ENCODE measurements at regions of chr20 and their contacts with region 1.

Region 1: GRCh38 chr20:9609887-9610502 is 95.6 kb downstream of the LAMP5 start:
- DNase-seq: peak; percentile 67
- H3K4me3 Mint-ChIP-seq: no peak overlapping the region
- H3K27ac Mint-ChIP-seq: no peak overlapping the region
- H3K4me1 Mint-ChIP-seq: no peaks in the 10 kb centered on the region
- H3K27me3 Mint-ChIP-seq: no peaks in the 10 kb centered on the region

Region 2: DNA sequence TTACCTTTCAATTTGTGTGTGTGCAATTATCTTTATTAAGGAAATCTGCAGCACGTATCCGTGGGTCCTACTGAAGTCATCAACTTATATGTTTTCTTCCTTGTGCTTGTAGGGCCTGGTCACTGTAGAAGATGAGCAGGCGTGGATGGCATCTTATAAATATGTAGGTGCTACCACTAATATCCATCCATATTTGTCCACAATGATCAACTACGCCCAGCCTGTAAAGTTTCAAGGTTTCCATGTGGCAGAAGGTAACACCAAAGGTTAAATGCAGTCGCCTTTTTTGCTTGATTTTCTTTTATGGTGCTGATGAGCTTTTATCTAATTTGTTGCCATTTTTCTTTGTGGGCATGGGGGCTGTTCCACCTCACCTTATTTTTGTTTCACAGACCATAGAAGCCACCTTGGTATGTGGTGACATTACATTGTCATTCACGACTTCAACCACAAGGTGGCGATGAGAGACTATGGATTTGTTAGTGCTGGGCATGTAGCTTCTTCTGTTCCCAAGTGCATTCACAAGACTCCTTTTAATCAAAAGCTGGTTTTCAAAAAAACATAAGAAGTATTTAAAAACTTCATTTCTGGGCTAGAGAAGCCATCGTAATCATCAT is 202.1 kb before region 1 on chr20:
- CTCF ChIA-PET with region 1: interaction called, 103 read pairs
- DNase-seq: peak; percentile 64
- H3K4me3 Mint-ChIP-seq: no peak overlapping the region
- H3K27ac Mint-ChIP-seq: no peak overlapping the region
- H3K4me1 Mint-ChIP-seq: no peaks in the 10 kb centered on the region
- H3K27me3 Mint-ChIP-seq: no peaks in the 10 kb centered on the region

Region 3: GRCh38 chr20:9590189-9590588 is 19.8 kb before region 1 on chr20:
- CTCF ChIA-PET with region 1: no interaction called
- DNase-seq: no peak
- H3K4me3 Mint-ChIP-seq: no peak overlapping the region
- H3K27ac Mint-ChIP-seq: no peak overlapping the region
- H3K4me1 Mint-ChIP-seq: no peaks in the 10 kb centered on the region
- H3K27me3 Mint-ChIP-seq: no peaks in the 10 kb centered on the region

Region 4: GRCh38 chr20:9626357-9626756 is 16.4 kb after region 1 on chr20:
- CTCF ChIA-PET with region 1: no interaction called
- DNase-seq: no peak
- H3K4me3 Mint-ChIP-seq: no peak overlapping the region
- H3K27ac Mint-ChIP-seq: no peak overlapping the region
- H3K4me1 Mint-ChIP-seq: no peaks in the 10 kb centered on the region
- H3K27me3 Mint-ChIP-seq: no peaks in the 10 kb centered on the region

Region 5: GRCh38 chr20:9817654-9818053 is 207.7 kb after region 1 on chr20:
- CTCF ChIA-PET with region 1: no interaction called
- DNase-seq: no peak
- H3K4me3 Mint-ChIP-seq: no peak overlapping the region
- H3K27ac Mint-ChIP-seq: no peak overlapping the region
- H3K4me1 Mint-ChIP-seq: no peaks in the 10 kb centered on the region
- H3K27me3 Mint-ChIP-seq: no peaks in the 10 kb centered on the region

Measured in activated naive CD4-positive, alpha-beta T cell treated with anti-CD3 and anti-CD28 coated beads, Interleukin-2, amount 10 ng/mL, durations not matched to agents 7 days and 5 days (primary cell).